ENCODE measurements at regions of chr15 and their contacts with region 1.

Region 1: GRCh38 chr15:44029940-44030568 is 165.0 kb downstream of the FRMD5 start:
- DNase-seq: no peak
- H3K4me3 ChIP-seq: no peak overlapping the region
- H3K27ac ChIP-seq: peak overlapping the region in 21 of 59 donors; percentile 2 to 67 (median 32)
- H3K27me3 ChIP-seq: no peaks in the 10 kb centered on the region
- CTCF ChIP-seq: peak in 33 of 56 donors; percentile 5 to 59 (median 31)

Region 2: DNA sequence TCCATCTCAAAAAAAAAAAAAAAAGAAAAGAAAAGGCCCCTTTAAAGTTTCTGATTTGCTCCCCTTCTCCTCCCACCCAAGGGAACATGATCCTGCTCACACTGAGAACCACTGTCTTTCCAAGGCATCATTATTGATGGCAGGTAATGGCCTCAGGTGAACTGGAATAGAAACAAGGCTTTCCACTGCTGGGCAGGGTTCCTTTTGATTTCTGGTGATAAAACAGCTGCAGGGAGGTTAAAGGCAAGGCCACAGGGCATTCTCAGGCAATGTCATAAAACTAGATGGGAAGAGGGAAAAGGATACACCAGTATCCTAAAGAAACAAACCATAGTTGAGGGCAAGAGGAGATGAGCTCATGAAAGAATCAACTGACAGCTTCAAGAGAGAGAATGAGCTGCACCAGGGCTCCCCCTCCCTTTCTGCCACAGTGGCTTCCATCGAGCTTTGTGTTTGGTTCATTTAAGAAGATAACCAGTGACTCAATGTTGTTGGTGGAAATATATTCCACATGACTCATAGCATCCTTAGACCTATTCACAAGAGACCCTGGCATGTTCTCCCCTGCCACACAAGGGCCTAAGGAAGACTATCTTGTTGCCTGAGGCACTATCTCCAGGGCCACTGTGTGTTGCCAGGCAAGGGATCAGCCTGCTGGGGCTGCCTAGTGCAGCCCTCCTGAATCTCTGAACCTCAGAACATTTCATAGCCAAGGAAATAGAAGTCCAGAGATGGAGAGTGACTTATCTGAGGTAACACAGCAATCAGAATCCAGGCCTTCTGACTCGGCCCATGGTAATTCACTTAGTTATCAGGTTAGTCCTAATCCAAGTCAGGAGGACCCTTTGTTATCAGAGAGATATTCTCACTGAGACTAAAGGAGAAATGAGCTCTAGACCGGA is 116.8 kb before region 1 on chr15:
- intact Hi-C with region 1: loop called in 1 of 2 experiments (anchors 5 kb)
- DNase-seq: peak in 7 of 10 donors; percentile 32 to 69 (median 59)
- H3K4me3 ChIP-seq: no peak overlapping the region
- H3K27ac ChIP-seq: peak overlapping the region in 57 of 59 donors; percentile 0 to 97 (median 78)
- H3K27me3 ChIP-seq: no peaks in the 10 kb centered on the region
- CTCF ChIP-seq: peak in 1 of 56 donors; percentile 22

Region 3: DNA sequence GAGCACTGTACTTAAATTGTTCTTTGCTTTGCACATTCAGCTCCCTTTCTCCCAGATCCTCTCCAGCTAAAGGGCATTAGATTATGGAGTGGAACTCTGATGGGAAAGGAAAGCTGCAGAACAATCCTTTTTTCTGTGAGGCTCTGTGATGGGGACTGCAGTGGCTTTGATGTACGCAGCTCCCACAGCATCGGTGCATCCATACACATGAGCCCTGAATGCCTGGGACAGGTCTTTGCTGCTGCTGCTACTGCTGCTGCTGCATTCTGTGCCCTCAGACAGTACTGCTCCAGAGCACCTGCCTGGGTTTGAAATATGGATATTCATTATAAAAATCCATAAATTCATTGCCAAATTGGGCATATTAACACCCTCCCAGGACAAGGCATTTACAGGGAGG is 38.8 kb before region 1 on chr15:
- intact Hi-C with region 1: no loop called
- DNase-seq: no peak
- H3K4me3 ChIP-seq: no peak overlapping the region
- H3K27ac ChIP-seq: peak overlapping the region in 42 of 59 donors; percentile 1 to 73 (median 34)
- H3K27me3 ChIP-seq: no peaks in the 10 kb centered on the region
- CTCF ChIP-seq: no peak